CD4-positive, alpha-beta T cell (primary cell): ENCODE measurements at regions of chr12 and their contacts with region 1.

Region 1: DNA sequence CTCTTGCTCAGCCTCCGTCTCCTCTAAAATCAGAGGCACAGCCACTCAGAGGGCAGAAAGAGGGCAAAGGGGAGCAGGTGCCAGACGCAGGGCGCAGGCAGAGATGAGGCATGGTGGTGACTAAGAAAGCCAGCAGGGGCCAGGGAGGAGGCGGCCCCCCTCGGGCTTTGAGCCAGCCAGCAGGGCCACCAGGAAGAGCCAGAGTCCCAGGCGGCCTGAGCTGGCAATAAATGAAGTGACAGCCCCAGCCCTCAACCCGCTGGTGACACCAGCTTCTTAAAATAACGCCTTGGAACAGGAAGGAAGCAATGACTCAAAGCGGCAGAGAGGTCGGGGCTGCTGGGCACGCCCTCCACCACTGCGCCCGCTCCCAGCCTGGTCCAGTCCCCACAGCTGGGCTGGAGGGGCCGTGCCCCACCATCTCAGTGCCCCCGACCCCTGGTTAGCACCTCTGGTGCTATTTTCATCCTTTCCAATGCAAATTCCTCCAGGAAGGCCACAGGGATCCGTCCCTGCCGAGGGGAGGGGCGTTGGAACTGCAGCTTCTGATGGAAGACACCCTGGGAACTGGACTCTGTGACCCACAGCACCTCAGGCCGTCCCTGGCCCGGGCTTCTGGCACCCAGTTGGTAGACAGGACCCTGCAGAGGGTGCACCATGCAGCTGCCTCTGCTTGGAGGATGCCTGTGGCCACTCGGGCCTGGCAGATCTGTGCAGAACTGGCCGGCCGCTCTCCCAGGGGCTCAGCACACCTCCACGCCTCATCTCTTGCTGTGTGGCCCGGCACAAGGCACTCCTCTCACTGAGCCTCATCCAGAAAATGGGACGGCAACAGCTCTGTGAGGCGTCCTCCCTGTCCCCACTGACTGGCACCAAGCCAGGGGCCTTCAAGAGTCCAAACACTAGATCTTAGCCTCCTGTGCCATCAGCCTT is 113.7 kb downstream of the NCOR2 start:
- DNase-seq: peak; percentile 53 to 93 (median 77)
- ATAC-seq: peak; percentile 78
- H3K4me3 ChIP-seq: peak overlapping the region; percentile 43
- H3K4me3 Mint-ChIP-seq: peak overlapping the region; percentile 80
- H3K27ac ChIP-seq: peak overlapping the region; percentile 68 to 74
- H3K27ac Mint-ChIP-seq: peak overlapping the region; percentile 78
- H3K4me1 ChIP-seq: peaks cover 91% of the 10 kb centered on the region
- H3K4me1 Mint-ChIP-seq: peaks cover 69% of the 10 kb centered on the region
- H3K27me3 ChIP-seq: no peaks in the 10 kb centered on the region
- H3K27me3 Mint-ChIP-seq: no peaks in the 10 kb centered on the region
- CTCF ChIP-seq: no peak

Region 2: DNA sequence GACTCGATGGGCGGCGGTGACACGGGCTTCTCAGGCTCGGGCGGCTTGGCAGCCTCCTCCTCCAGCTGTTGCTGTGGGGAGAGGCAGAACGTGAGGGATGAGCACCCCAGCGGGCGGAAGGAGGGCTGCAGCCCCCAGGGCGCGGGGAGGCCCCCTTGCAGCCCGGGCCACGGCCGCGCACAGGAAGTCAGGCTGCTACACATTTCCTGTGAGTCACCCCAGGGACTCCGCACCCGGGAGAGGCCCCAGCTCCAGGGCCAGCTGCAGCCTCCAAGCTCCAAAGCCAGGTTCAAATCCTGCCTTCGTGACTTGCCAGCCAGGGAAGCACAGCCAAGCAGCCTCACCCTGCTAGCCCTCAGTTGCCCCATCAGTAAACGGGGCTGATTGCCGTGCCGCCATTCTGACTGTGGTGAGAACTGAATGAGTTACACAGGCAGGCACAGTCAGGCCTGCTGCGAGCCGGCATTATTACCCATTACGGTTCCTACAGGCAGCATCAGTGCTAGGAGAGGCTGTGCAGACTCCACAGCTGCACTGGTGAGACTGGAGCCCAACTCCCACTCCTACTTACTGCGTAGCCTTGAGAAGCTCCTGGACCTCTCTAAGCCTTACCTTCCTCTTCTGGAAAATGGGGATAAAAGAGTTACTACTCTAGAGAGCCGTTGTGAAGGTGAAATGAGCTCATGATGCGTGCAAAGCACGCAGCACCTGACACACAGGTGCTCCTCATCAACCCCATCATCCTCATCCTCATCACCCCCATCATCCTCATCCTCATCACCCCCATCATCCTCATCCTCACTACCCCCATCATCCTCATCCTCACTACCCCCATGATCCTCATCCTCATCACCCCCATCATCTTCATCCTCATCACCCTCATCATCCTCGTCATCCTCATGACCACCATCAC is 12.8 kb after region 1 on chr12:
- CTCF ChIA-PET with region 1: interaction called, 25 read pairs
- POLR2A ChIA-PET with region 1: interaction called, 21 read pairs
- intact Hi-C with region 1: loop called in 1 of 2 experiments (anchors 1 kb)
- DNase-seq: peak; percentile 78 to 96 (median 86)
- ATAC-seq: peak; percentile 92
- H3K4me3 ChIP-seq: peak overlapping the region; percentile 52
- H3K4me3 Mint-ChIP-seq: peak overlapping the region; percentile 74
- H3K27ac ChIP-seq: peak overlapping the region; percentile 74 to 82
- H3K27ac Mint-ChIP-seq: peak overlapping the region; percentile 91
- H3K4me1 ChIP-seq: peaks cover 50% of the 10 kb centered on the region
- H3K4me1 Mint-ChIP-seq: peaks cover 59% of the 10 kb centered on the region
- H3K27me3 ChIP-seq: no peaks in the 10 kb centered on the region
- H3K27me3 Mint-ChIP-seq: no peaks in the 10 kb centered on the region
- CTCF ChIP-seq: peak; percentile 57